Psoas muscle (tissue), 8 donors: ENCODE measurements at regions of chr9 and their contacts with region 1.

Region 1: DNA sequence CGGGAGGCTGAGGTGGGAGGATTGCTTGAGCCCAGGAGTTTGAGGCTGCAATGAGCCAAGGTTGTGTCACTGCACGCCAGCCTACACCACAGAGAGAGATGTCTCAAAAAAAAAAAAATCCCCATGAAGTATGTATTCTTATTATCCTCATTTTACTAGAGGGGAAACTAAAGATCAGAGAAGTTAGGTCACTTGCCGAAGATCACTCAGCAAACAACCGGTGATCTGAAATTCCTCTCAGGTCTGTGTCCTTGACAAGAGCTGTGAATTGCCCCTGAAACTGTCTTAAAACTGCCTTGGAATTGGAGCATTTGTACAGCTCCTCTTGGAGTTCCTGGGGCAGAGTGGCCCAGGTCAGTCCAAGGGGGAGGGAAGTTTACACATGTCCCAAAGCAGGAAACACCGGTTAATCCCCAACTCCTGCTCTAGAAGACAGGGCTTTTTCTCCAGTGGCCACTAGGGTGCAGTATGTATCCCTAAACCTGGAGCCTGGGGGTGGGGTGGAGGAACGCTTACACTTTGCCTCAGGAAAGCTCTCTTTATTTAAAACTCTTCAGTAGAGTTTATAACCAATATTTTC is 27.6 kb downstream of the AQP7 start:
- DNase-seq: peak; percentile 62 to 66
- ATAC-seq: peak; percentile 75 to 84 (median 79)
- H3K4me3 ChIP-seq: peak overlapping the region; percentile 22
- H3K27ac ChIP-seq: peak overlapping the region; percentile 58
- H3K4me1 ChIP-seq: peaks cover 18% of the 10 kb centered on the region
- H3K27me3 ChIP-seq: no peaks in the 10 kb centered on the region
- CTCF ChIP-seq: peak; percentile 83

Region 2: DNA sequence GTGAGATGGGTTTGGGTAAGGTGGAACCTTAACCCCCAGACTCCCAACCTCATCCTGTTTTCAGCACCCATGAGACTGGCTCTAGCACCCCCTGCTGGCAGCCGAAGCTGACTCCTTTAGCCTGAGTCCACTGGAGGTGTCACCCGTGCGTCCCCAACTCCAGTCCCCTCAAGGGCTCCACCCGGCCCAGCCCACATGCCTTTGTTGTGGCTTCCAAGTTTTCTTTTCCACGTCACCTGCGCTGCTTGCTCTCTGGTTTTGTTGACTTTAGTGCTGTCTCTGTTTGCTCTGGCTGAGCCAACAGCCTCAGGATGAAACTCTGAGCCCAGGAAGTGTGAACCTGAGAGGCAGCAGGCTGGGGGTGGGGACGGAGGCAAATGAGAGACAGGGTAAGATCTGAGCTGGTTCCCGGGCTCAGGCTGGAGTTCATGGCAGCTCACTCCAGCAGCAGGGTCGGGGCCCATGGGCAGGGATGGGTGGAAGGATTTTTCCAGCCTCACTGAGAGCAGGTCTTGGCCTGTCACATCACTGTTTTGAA is 40.8 kb after region 1 on chr9:
- intact Hi-C with region 1: loop called (anchors 2 to 5 kb)
- DNase-seq: peak; percentile 72 to 85
- ATAC-seq: peak; percentile 78 to 91 (median 85)
- H3K4me3 ChIP-seq: no peak overlapping the region
- H3K27ac ChIP-seq: no peak overlapping the region
- H3K4me1 ChIP-seq: no peaks in the 10 kb centered on the region
- H3K27me3 ChIP-seq: no peaks in the 10 kb centered on the region
- CTCF ChIP-seq: peak; percentile 75

Region 3: DNA sequence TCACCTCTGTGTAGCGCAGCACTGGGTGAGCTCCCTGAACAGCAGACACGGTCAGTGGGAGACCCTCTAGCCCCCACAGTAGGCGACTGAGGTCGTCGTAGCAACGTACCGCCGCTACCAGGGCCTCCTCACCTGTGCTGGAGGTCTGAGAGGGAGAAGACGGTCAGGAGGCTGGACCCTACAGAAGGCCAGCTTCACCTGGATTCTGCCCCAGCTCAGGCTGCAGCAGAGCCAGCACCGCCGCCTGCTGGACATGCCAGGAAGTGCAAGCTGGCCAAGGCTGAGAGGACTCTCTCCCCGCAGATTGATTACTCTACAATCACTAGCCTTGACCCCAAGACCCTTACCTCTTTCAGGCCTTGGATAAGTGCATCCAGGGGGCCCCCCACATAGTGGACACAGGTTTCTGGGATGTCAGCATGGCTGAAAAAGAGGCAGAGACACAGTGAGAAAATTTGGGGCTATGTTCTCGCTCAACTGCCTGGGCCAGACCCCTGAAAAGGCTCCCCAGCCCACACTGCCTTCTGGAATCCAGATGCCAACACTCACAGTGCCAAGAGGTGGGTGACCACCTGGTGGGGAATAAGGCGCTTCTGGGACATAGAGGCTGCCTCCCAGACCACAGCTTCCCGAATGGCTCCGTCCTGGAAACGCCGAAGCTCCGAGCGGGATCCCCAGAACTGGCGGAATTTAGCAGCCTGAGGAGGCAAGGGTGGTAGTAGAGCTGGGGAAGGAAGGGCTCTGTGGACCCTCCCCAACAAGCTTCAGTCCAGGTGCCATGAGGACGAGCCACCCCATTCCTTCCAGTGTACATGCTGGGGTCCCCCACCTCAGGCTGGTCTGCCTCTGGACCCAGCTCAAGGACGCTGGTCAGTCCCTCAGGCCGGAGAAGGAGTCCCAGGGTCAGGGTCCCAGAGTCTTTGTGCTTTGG is 92.1 kb after region 1 on chr9:
- intact Hi-C with region 1: loop called (anchors 5 kb)
- DNase-seq: peak; percentile 60 to 77
- ATAC-seq: peak; percentile 68 to 83 (median 79)
- H3K4me3 ChIP-seq: no peak overlapping the region
- H3K27ac ChIP-seq: no peak overlapping the region
- H3K4me1 ChIP-seq: peaks cover 2% of the 10 kb centered on the region
- H3K27me3 ChIP-seq: no peaks in the 10 kb centered on the region
- CTCF ChIP-seq: peak; percentile 94

Region 4: GRCh38 chr9:33988219-33988890 is 613.6 kb after region 1 on chr9:
- intact Hi-C with region 1: no loop called
- DNase-seq: no peak
- ATAC-seq: peak; percentile 54 to 76 (median 70)
- H3K4me3 ChIP-seq: no peak overlapping the region
- H3K27ac ChIP-seq: no peak overlapping the region
- H3K4me1 ChIP-seq: no peaks in the 10 kb centered on the region
- H3K27me3 ChIP-seq: no peaks in the 10 kb centered on the region
- CTCF ChIP-seq: no peak